ENCODE measurements at regions of chr7 and their contacts with region 1.

Region 1: DNA sequence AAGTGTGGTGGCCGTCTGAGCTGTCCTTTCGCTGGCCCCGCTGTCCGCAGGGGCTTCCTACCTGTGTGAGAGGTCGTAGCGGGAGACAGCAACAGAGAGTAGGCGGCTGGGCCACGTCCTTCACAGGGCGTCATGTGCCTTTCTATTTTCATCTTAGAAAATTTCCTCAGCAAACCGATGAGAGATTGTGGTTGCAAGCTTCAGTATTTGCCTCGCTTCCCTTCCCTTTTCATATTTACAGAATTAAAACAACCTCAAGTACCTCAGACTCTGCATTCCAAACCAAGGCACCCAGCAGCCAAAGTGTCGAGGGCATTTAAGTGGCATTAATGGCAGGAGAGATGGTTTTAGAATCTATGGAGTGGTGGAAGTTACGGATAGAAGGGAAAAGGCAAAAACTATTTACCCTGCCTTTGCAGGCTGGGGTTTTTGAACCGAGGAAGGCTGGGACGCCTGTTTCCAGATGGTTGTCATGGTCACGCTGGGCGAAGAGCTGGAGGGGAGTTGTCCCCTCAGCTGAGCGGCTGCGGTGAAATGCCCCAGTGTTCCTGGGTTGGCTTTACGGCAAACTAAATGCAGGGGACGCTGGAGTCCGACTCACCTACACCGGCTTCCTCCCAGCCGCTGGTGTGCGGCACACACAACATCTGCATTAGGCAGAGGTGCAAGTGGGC is 41.9 kb downstream of the WIPI2 start:
- DNase-seq: peak; percentile 93
- ATAC-seq: peak; percentile 77
- H3K4me3 ChIP-seq: peak overlapping the region; percentile 35
- H3K27ac ChIP-seq: peak overlapping the region; percentile 99
- H3K4me1 ChIP-seq: peaks cover 68% of the 10 kb centered on the region
- H3K27me3 ChIP-seq: no peaks in the 10 kb centered on the region
- CTCF ChIP-seq: peak in 1 of 3 experiments; percentile 46; a peak in 1 of 6 replicates
- EP300 ChIP-seq: peak; percentile 94 to 97
- POLR2A ChIP-seq: peak; percentile 46; the same call in 1 of the 2 replicates
- RAD21 ChIP-seq: no peak

Region 2: GRCh38 chr7:5117095-5117970 is 114.6 kb before region 1 on chr7:
- CTCF ChIA-PET with region 1: no interaction called
- POLR2A ChIA-PET with region 1: no interaction called
- RAD21 ChIA-PET with region 1: no interaction called
- SMC1A ChIA-PET with region 1: no interaction called
- in situ Hi-C with region 1: no loop called
- intact Hi-C with region 1: no loop called
- DNase-seq: no peak
- ATAC-seq: no peak
- H3K4me3 ChIP-seq: no peak overlapping the region
- H3K27ac ChIP-seq: no peak overlapping the region
- H3K4me1 ChIP-seq: no peaks in the 10 kb centered on the region
- H3K27me3 ChIP-seq: no peaks in the 10 kb centered on the region
- CTCF ChIP-seq: no peak
- EP300 ChIP-seq: no peak
- POLR2A ChIP-seq: no peak
- RAD21 ChIP-seq: no peak

Region 3: DNA sequence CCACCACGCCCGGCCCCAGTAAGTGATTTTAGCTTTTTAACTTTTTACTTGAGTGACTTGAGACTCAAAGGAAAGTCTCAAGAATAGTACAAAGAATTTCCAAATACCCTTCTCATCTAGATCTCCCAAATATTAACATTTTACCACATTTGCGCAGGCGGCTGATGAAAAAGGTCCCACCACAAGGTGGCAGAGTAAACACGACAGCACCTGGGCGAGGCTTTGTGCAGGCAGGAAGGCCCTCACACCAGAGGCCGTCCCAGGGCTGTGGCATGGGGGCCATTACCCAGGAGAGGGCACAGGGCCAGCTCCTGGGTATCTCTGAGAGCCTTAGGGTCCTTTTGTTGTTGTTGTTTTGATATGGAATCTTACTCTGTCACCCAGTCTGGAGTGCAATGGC is 92.0 kb before region 1 on chr7:
- CTCF ChIA-PET with region 1: interaction called, 3 read pairs
- POLR2A ChIA-PET with region 1: interaction called, 3 read pairs
- RAD21 ChIA-PET with region 1: interaction called, 4 read pairs
- SMC1A ChIA-PET with region 1: interaction called, 3 read pairs
- in situ Hi-C with region 1: no loop called
- intact Hi-C with region 1: loop called (anchors 5 kb)
- DNase-seq: peak; percentile 8
- ATAC-seq: no peak
- H3K4me3 ChIP-seq: no peak overlapping the region
- H3K27ac ChIP-seq: no peak overlapping the region
- H3K4me1 ChIP-seq: 0 out of 2 replicates have a peak, but pooled peaks cover 3% of the 10 kb centered on the region
- H3K27me3 ChIP-seq: no peaks in the 10 kb centered on the region
- CTCF ChIP-seq: peak; percentile 48 to 56 (median 50); a peak in 5 of 6 replicates
- EP300 ChIP-seq: no peak
- POLR2A ChIP-seq: no peak
- RAD21 ChIP-seq: peak; percentile 66

Region 4: GRCh38 chr7:5218564-5219360 is 13.2 kb before region 1 on chr7:
- CTCF ChIA-PET with region 1: interaction called, 52 read pairs
- POLR2A ChIA-PET with region 1: interaction called, 53 read pairs
- RAD21 ChIA-PET with region 1: interaction called, 71 read pairs
- SMC1A ChIA-PET with region 1: interaction called, 139 read pairs
- in situ Hi-C with region 1: no loop called
- intact Hi-C with region 1: loop called (anchors 1 kb)
- DNase-seq: peak; percentile 97
- ATAC-seq: peak; percentile 88
- H3K4me3 ChIP-seq: peak overlapping the region; percentile 40
- H3K27ac ChIP-seq: peak overlapping the region; percentile 96
- H3K4me1 ChIP-seq: peaks cover 28% of the 10 kb centered on the region
- H3K27me3 ChIP-seq: no peaks in the 10 kb centered on the region
- CTCF ChIP-seq: no peak
- EP300 ChIP-seq: peak; percentile 82 to 86; a peak in 3 of 4 replicates
- POLR2A ChIP-seq: peak; percentile 85
- RAD21 ChIP-seq: no peak

Region 5: DNA sequence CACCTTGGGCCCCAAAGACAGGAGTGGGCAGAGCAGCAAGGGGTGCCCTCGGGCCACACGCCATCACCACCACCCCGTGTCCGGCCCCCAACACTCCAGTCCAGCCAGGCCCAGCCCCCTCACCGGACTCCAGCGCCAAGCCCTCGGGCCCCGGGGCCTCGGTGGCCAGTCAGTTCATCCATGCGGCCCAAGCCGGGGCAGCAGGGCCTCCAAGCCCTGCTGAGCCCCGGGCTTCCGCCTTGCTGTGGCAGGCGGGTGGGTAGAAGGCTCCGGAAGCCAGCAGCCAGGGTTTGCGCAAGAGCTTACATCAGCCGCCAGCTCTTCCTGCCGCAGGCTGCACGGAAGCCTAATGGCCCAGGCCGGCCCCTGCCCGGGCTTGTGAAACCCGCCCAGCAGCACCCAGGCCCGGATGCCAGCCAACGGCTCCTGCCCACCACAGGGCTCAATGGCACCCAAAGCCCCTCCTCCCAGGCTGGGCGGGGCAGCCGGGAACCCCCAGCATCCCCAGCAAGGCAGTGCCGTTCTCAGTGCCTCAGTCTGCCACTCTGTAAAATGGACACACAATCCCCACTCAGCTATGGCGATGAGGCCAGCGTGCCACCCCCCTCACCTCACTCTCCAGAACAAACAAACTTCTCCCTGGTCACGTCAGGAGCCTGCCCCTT is 165.2 kb after region 1 on chr7:
- CTCF ChIA-PET with region 1: interaction called, 10 read pairs
- POLR2A ChIA-PET with region 1: no interaction called
- RAD21 ChIA-PET with region 1: interaction called, 8 read pairs
- SMC1A ChIA-PET with region 1: interaction called, 4 read pairs
- in situ Hi-C with region 1: no loop called
- intact Hi-C with region 1: no loop called
- DNase-seq: peak; percentile 77
- ATAC-seq: peak; percentile 96
- H3K4me3 ChIP-seq: peak overlapping the region; percentile 96
- H3K27ac ChIP-seq: peak overlapping the region; percentile 88
- H3K4me1 ChIP-seq: peaks cover 5% of the 10 kb centered on the region; the same call in 1 of the 2 replicates
- H3K27me3 ChIP-seq: no peaks in the 10 kb centered on the region
- CTCF ChIP-seq: no peak
- EP300 ChIP-seq: peak in 1 of 2 experiments; percentile 46; a peak in 2 of 4 replicates
- POLR2A ChIP-seq: peak; percentile 82
- RAD21 ChIP-seq: no peak

Region 6: DNA sequence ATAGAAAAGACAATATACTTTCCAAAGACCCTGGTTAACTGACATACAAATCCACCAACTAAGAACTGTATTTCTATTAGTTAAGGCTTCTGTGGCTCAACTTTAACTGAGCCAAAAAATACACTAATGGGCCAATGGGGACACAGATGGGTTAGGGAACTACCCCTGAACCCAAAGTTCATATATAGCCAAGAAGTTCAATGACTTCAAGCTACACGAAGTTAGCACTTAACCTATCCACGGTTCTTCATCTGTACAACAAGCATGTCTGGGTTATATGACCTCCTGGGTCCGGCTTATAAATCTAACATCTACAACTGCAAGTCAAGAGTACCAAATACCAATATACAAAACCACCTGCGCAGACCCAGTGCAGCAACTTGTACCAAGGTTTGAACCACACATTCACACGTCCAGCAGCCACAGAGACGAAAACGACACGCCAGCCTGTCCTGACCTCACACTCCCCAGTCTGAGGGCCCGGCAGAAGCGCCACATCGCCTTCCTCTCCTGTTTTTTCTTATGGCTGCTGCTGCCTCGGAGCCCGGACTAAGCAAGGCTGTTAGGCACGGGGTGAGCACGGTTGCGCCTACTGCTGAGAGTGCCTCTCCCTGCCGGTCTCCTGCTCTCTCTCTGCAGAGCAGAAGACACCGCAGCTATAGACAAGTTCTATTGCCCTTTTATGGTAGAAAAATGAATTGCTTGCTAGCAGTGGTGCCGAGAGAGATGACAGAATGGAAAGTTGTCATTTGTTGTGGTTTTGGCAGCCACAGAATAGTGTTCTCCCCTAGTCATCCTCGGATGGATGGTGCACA is 463.2 kb after region 1 on chr7:
- CTCF ChIA-PET with region 1: no interaction called
- POLR2A ChIA-PET with region 1: no interaction called
- RAD21 ChIA-PET with region 1: interaction called, 9 read pairs
- SMC1A ChIA-PET with region 1: interaction called, 3 read pairs
- in situ Hi-C with region 1: loop called (anchors 5 kb)
- intact Hi-C with region 1: loop called (anchors 5 kb)
- DNase-seq: peak; percentile 94
- ATAC-seq: peak; percentile 67
- H3K4me3 ChIP-seq: peak overlapping the region; percentile 49
- H3K27ac ChIP-seq: peak overlapping the region; percentile 94
- H3K4me1 ChIP-seq: peaks cover 89% of the 10 kb centered on the region
- H3K27me3 ChIP-seq: no peaks in the 10 kb centered on the region
- CTCF ChIP-seq: no peak
- EP300 ChIP-seq: peak; percentile 79 to 86
- POLR2A ChIP-seq: peak; percentile 97
- RAD21 ChIP-seq: peak; percentile 17; the same call in 1 of the 2 replicates